Prostate gland (tissue), 2 donors: ENCODE measurements at regions of chr11 and their contacts with region 1.

Region 1: GRCh38 chr11:110195845-110196754 is 100.3 kb downstream of the RDX start:
- DNase-seq: no peak
- H3K4me3 ChIP-seq: no peak overlapping the region
- H3K27ac ChIP-seq: no peak overlapping the region
- H3K4me1 ChIP-seq: no peaks in the 10 kb centered on the region
- H3K27me3 ChIP-seq: no peaks in the 10 kb centered on the region
- CTCF ChIP-seq: no peak
- POLR2A ChIP-seq: no peak

Region 2: DNA sequence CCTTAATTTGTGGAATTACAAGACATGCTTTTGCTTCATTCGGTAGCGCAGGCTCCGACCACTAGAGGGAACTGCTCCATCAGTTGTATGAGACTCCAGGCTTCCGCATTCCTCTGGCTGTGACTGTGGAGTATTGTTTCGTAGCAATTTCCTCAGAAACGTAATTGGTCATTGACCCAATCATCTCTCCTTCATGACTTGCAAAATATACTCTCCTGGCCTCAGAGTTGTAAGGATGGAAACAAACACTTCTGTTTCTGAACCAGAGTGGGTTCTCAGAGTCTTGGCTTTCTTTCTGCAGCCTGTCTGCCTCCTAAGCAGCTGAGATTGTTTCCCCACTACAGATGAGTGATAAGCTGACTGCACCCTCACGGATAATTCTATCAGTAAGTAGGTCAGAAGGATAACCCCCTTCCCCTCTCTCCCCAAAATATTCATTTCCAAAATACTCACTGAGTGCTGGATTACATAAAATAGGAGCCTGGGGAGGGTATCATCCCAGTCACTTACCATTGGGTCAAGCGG is 249.7 kb before region 1 on chr11:
- intact Hi-C with region 1: loop called (anchors 10 kb)
- DNase-seq: peak; percentile 68
- H3K4me3 ChIP-seq: no peak overlapping the region
- H3K27ac ChIP-seq: no peak overlapping the region
- H3K4me1 ChIP-seq: no peaks in the 10 kb centered on the region
- H3K27me3 ChIP-seq: no peaks in the 10 kb centered on the region
- CTCF ChIP-seq: peak; percentile 76 to 85 (median 80)
- POLR2A ChIP-seq: no peak

Region 3: DNA sequence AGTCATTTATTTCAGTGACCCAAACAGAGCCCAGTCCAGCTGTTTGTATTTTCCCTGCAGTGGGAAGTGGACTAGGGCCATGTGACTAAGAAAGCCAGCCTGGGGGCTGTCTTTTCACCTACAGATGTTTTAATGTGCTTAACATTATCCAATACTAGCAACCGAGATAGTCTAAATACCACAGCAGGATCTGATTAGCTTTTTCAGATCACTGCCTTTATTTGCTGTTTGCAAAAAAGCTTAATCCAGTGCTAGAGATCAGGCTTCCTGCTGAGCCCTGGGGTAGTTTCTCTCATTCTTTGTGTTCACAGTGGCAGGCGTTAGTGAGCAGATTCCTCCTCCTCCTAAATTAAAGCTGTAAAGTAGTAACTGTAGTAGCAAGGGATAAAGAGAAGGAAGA is 67.9 kb before region 1 on chr11:
- intact Hi-C with region 1: no loop called
- DNase-seq: no peak
- H3K4me3 ChIP-seq: no peak overlapping the region
- H3K27ac ChIP-seq: no peak overlapping the region
- H3K4me1 ChIP-seq: no peaks in the 10 kb centered on the region
- H3K27me3 ChIP-seq: no peaks in the 10 kb centered on the region
- CTCF ChIP-seq: no peak
- POLR2A ChIP-seq: no peak

Region 4: GRCh38 chr11:110376711-110377324 is 180.7 kb after region 1 on chr11:
- intact Hi-C with region 1: loop called (anchors 2 kb)
- DNase-seq: peak; percentile 70
- H3K4me3 ChIP-seq: peak overlapping the region in 1 of 2 donors; percentile 11
- H3K27ac ChIP-seq: peak overlapping the region; percentile 27 to 49
- H3K4me1 ChIP-seq: no peaks in the 10 kb centered on the region
- H3K27me3 ChIP-seq: no peaks in the 10 kb centered on the region
- CTCF ChIP-seq: peak; percentile 17 to 76 (median 63)
- POLR2A ChIP-seq: no peak

Region 5: GRCh38 chr11:110429731-110430266 is 233.7 kb after region 1 on chr11 and contains the start of gene FDX1:
- intact Hi-C with region 1: loop called (anchors 5 kb)
- DNase-seq: peak; percentile 76
- H3K4me3 ChIP-seq: peak within 1 kb of the TSS; percentile 79 to 89
- H3K27ac ChIP-seq: peak within 1 kb of the TSS; percentile 90 to 92
- H3K4me1 ChIP-seq: no peaks in the 10 kb centered on the region
- H3K27me3 ChIP-seq: no peaks in the 10 kb centered on the region
- CTCF ChIP-seq: peak; percentile 32 to 79 (median 58)
- POLR2A ChIP-seq: peak; percentile 57
- total RNA-seq, gene FDX1: 12.8 to 21.2 TPM

Region 6: DNA sequence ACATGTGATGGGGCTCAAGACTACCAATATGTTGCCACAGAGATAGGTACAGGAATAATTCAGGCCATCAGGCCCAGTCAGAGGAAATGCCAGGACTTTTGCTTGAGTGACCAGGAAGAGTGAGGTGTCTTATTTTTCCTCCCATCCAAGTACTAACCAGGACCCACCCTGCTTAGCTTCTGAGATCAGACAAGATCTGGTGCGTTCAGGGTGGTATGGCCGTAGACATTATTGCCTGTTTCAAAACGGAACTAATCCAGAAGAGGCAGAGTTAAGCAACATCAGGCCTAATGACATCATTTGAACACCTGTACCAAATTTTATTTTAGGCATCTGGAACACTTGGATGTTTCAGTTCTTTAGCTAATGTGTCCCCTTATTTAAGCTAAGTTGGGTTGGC is 843.9 kb after region 1 on chr11:
- intact Hi-C with region 1: loop called (anchors 10 kb)
- DNase-seq: no peak
- H3K4me3 ChIP-seq: no peak overlapping the region
- H3K27ac ChIP-seq: no peak overlapping the region
- H3K4me1 ChIP-seq: no peaks in the 10 kb centered on the region
- H3K27me3 ChIP-seq: no peaks in the 10 kb centered on the region
- CTCF ChIP-seq: no peak
- POLR2A ChIP-seq: no peak